K562 (cell line): ENCODE measurements at regions of chr4 and their contacts with region 1.

Region 1: DNA sequence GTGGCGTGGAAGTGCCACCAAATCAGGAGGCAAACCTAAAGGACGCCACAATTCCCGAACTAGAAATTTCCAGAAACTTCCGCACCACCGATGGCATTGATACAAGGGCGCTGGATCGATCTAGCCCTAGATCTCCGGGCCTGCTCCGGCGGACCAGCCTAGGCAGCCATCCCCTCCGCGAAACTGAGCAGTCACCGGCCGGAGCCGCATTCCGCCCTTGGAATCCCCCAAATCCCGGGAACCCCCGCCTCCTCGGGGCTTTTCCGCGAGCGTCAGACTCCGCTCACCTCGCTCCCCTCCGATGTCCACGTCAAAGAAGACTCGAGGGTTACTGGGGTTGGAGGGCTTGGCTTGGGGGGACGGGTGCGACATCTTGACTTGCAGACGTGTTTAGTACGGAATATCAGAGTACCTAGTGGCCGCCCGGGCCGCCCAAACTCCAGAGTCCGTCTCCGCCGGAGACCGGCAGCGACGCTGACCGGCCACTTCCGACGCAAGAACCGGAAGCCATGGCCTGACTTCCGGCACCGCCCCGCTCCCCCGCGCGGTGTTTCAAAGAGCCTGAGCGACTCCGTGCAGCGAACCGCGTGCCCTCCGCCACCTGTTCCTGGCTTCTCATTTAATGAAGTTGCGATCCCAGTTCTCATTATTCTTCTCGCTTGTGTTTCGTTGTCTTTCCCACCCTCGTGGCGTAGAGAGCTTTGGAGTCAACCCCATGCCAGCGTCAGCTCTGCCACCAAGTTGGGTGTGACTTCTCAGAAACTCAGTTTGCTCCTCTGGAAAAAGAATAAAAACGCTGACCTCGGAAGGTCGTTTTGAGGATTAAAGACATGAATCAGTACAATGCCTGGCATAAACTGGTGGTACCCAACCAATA is at the start of gene PPID:
- DNase-seq: peak; percentile 86 to 95 (median 88)
- ATAC-seq: peak; percentile 99
- H3K4me3 ChIP-seq: peak within 1 kb of the TSS; percentile 86
- H3K27ac ChIP-seq: peak within 1 kb of the TSS; percentile 91
- H3K4me1 ChIP-seq: peaks cover 0 to 5% of the 10 kb centered on the region in 2 experiments; a peak in 2 of 5 replicates
- H3K27me3 ChIP-seq: no peaks in the 10 kb centered on the region
- CTCF ChIP-seq: 0 out of 6 replicates have a peak, but pooled peaks of 2 of the 3 experiments have one; percentile 5 to 7
- EP300 ChIP-seq: no peak
- POLR2A ChIP-seq: peak; percentile 93
- RAD21 ChIP-seq: no peak
- polyA plus RNA-seq, gene PPID: 57.5 to 135 TPM

Region 2: DNA sequence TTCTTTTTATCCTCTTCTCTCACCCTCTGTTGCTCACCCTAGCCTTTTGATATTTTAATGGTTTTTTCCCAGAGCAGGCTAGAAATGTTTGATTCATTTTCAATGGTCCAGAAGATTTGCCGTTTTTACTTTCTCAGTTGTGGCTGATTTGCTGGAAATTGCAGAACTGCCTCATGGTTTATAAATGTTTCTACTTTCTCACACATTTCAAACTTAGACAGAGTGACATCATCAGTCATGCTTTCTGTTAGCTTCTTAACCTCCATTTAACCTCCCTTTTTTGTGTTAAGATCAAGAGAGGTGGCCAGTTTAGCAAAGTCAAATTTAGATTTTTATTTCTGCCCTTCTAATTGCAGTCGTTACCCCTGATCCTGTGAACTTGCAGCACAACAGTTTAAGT is 192.8 kb before region 1 on chr4:
- CTCF ChIA-PET with region 1: no interaction called
- POLR2A ChIA-PET with region 1: no interaction called
- in situ Hi-C with region 1: no loop called
- intact Hi-C with region 1: no loop called
- DNase-seq: no peak
- ATAC-seq: no peak
- H3K4me3 ChIP-seq: no peak overlapping the region
- H3K27ac ChIP-seq: no peak overlapping the region
- H3K4me1 ChIP-seq: no peaks in the 10 kb centered on the region; a peak in 1 of 5 replicates
- H3K27me3 ChIP-seq: no peaks in the 10 kb centered on the region; a peak in 1 of 5 replicates
- CTCF ChIP-seq: no peak
- EP300 ChIP-seq: no peak
- POLR2A ChIP-seq: no peak
- RAD21 ChIP-seq: no peak

Region 3: DNA sequence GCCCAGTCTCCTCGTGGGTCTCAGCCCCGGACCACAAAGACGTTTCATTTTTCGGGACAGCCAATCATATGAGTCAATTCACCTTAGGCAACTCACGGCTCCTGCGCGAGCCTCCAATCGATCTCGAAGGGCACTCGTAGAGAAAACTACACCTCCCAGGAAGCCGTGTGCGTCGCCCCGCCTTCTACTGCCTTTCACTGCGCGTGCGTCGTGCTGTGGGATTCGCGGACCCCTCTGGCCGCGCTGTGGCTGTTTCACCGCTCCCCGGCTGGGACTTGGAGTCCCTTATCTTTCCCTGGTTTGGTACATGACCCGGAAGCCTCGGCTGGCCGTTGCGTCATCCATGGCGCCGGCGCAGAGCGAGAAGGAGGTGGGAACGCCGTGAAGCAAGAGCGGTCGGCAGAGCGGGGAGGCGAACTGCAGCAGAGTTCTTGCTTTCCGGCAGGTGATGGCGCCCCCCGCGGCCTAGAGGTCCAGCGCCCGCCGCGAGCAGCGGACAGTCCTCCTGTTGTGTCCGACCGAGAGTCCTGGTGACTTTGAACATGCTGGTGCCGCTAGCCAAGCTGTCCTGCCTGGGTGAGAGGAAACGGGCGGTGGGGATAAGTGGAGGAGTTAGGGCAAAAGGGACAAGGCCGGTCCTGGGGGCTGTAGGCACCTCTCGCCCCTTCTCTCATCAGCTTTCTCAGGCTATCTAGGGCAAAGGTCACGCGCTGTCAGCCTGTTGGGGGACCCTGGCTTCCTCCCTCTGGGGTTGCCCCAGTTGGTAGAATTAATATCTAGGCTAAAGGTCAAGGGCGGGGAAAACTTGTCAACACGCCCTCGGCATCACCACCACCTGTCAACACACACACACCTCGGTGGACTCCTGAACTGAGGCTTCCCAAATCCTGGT is 51.0 kb before region 1 on chr4 and contains the start of gene ETFDH:
- CTCF ChIA-PET with region 1: no interaction called
- POLR2A ChIA-PET with region 1: no interaction called
- in situ Hi-C with region 1: no loop called
- intact Hi-C with region 1: loop called (anchors 2 kb)
- DNase-seq: peak; percentile 94 to 99 (median 96)
- ATAC-seq: peak; percentile 87
- H3K4me3 ChIP-seq: peak within 1 kb of the TSS; percentile 92
- H3K27ac ChIP-seq: peak within 1 kb of the TSS; percentile 81
- H3K4me1 ChIP-seq: peaks cover 9 to 16% of the 10 kb centered on the region in 2 experiments; a peak in 4 of 5 replicates
- H3K27me3 ChIP-seq: no peaks in the 10 kb centered on the region
- CTCF ChIP-seq: peak; percentile 66 to 74 (median 67)
- EP300 ChIP-seq: no peak
- POLR2A ChIP-seq: peak; percentile 78
- RAD21 ChIP-seq: peak in 1 of 2 experiments; percentile 37; a peak in 1 of 4 replicates
- polyA plus RNA-seq, gene ETFDH: 14.6 to 25.1 TPM

Region 4: DNA sequence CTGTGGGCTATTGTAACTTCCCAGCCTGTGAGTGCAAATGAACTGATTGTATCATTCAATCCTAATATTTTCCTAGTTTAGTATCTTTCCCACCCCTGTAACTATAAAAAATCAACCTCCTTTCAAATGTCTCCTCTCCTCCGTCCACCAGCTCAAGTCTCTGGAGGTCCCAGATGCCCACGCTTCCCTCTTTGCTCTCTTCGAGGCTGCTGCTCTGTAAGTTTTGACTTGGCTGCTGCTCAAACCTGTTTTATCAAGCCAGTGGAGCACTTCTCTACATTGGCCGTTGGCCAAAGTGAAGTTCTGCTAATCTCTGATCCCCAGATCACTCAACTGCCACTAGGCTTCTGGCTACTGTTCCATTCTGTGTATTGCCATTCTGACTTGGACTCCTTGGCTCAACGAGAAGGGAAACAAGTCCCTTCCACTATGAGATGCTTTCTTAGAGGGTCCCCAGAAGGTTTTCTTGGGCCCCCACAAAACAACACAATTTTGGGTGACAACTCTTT is 319.0 kb after region 1 on chr4:
- CTCF ChIA-PET with region 1: no interaction called
- POLR2A ChIA-PET with region 1: no interaction called
- in situ Hi-C with region 1: no loop called
- intact Hi-C with region 1: no loop called
- DNase-seq: peak; percentile 50 to 98 (median 70)
- ATAC-seq: peak; percentile 88
- H3K4me3 ChIP-seq: peak overlapping the region; percentile 21
- H3K27ac ChIP-seq: peak overlapping the region; percentile 84
- H3K4me1 ChIP-seq: peaks cover 26 to 39% of the 10 kb centered on the region in 2 experiments
- H3K27me3 ChIP-seq: no peaks in the 10 kb centered on the region
- CTCF ChIP-seq: 0 out of 6 replicates have a peak, but pooled peaks of 1 of the 3 experiments have one; percentile 16
- EP300 ChIP-seq: peak; percentile 99
- POLR2A ChIP-seq: peak; percentile 62
- RAD21 ChIP-seq: peak in 1 of 2 experiments; percentile 41; a peak in 3 of 4 replicates

Region 5: DNA sequence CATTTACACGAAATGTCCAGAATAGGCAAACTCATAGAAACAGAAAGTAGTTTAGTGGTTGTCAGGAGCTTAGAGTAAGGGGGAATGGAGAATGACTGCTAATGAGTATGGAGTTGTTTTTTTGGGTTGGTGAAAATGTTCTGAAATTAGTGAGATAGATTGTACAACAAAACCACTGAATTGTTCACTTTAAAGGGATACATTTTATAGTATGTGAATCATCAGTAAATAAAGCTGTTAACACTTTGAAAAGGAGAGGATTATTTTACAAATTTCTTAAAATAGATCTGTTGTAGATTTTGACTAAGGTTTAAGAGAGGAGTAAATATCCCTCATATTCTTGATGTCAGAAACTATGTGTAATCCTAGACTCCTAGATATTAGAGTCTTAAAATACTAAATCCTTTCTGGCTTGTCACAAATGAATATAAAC is 462.5 kb after region 1 on chr4:
- CTCF ChIA-PET with region 1: no interaction called
- POLR2A ChIA-PET with region 1: no interaction called
- in situ Hi-C with region 1: loop called (anchors 10 kb)
- intact Hi-C with region 1: no loop called
- DNase-seq: no peak
- ATAC-seq: peak; percentile 34
- H3K4me3 ChIP-seq: no peak overlapping the region
- H3K27ac ChIP-seq: no peak overlapping the region
- H3K4me1 ChIP-seq: peaks cover under 1 to 4% of the 10 kb centered on the region in 2 experiments; a peak in 4 of 5 replicates
- H3K27me3 ChIP-seq: no peaks in the 10 kb centered on the region
- CTCF ChIP-seq: no peak
- EP300 ChIP-seq: no peak
- POLR2A ChIP-seq: no peak
- RAD21 ChIP-seq: no peak

Region 6: GRCh38 chr4:159823743-159824142 is 1100.6 kb after region 1 on chr4:
- CTCF ChIA-PET with region 1: no interaction called
- POLR2A ChIA-PET with region 1: no interaction called
- in situ Hi-C with region 1: no loop called
- intact Hi-C with region 1: no loop called
- DNase-seq: no peak
- ATAC-seq: no peak
- H3K4me3 ChIP-seq: no peak overlapping the region
- H3K27ac ChIP-seq: no peak overlapping the region
- H3K4me1 ChIP-seq: no peaks in the 10 kb centered on the region
- H3K27me3 ChIP-seq: no peaks in the 10 kb centered on the region
- CTCF ChIP-seq: no peak
- EP300 ChIP-seq: no peak
- POLR2A ChIP-seq: no peak
- RAD21 ChIP-seq: no peak

Region 7: GRCh38 chr4:160233141-160233540 is 1510.0 kb after region 1 on chr4:
- CTCF ChIA-PET with region 1: no interaction called
- POLR2A ChIA-PET with region 1: no interaction called
- in situ Hi-C with region 1: no loop called
- intact Hi-C with region 1: no loop called
- DNase-seq: no peak
- ATAC-seq: no peak
- H3K4me3 ChIP-seq: no peak overlapping the region
- H3K27ac ChIP-seq: no peak overlapping the region
- H3K4me1 ChIP-seq: no peaks in the 10 kb centered on the region
- H3K27me3 ChIP-seq: no peaks in the 10 kb centered on the region
- CTCF ChIP-seq: no peak
- EP300 ChIP-seq: no peak
- POLR2A ChIP-seq: no peak
- RAD21 ChIP-seq: no peak